ENCODE measurements at regions of chr9 and their contacts with region 1.

Region 1: GRCh38 chr9:126704873-126705766 is 91.4 kb downstream of the LMX1B start:
- DNase-seq: peak; percentile 47 to 98
- H3K4me3 ChIP-seq: peak overlapping the region in 3 of 4 experiments; percentile 5 to 31 (median 19); a peak in 2 of 8 replicates
- H3K27ac ChIP-seq: no peak overlapping the region
- H3K4me1 ChIP-seq: peaks cover 0 to 11% (median 8%) of the 10 kb centered on the region in 4 experiments; a peak in 5 of 7 replicates
- H3K27me3 ChIP-seq: peaks cover 4 to 36% (median 30%) of the 10 kb centered on the region in 4 experiments
- CTCF ChIP-seq: peak in 2 of 3 experiments; percentile 93 to 94; a peak in 3 of 4 replicates
- EP300 ChIP-seq: no peak
- POLR2A ChIP-seq: no peak
- RAD21 ChIP-seq: peak; percentile 68 to 77

Region 2: DNA sequence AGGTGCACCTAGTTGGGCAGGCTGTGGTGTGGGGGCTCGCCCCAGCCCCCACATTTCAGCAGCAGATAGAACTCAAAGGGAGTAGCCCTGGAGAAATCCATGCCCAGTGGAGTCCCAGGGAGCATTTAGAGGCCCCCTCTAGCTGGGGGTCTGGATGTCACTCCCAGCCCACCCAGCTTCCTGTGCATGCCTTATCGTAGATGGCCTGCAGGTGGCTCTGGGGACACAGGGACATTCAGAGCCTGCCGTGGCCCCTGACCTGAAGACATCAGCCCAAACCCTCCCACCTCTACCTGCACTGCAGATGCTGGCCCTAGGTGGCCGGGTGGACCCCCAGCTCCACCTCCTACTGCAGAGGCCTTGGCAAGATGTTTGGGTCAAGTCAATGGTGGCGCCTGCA is 140.4 kb before region 1 on chr9:
- CTCF ChIA-PET with region 1: interaction called, 11 read pairs
- POLR2A ChIA-PET with region 1: no interaction called
- DNase-seq: no peak
- H3K4me3 ChIP-seq: no peak overlapping the region
- H3K27ac ChIP-seq: no peak overlapping the region
- H3K4me1 ChIP-seq: no peaks in the 10 kb centered on the region; a peak in 1 of 7 replicates
- H3K27me3 ChIP-seq: peaks cover 0 to 3% (median 0%) of the 10 kb centered on the region in 4 experiments; a peak in 2 of 7 replicates
- CTCF ChIP-seq: peak; percentile 69 to 73 (median 71)
- EP300 ChIP-seq: no peak
- POLR2A ChIP-seq: no peak
- RAD21 ChIP-seq: peak; percentile 41 to 64

Region 3: GRCh38 chr9:126611592-126612325 is 93.4 kb before region 1 on chr9:
- CTCF ChIA-PET with region 1: interaction called, 54 read pairs
- POLR2A ChIA-PET with region 1: no interaction called
- DNase-seq: peak; percentile 70 to 95
- H3K4me3 ChIP-seq: peak overlapping the region; percentile 30 to 63 (median 34); a peak in 6 of 8 replicates
- H3K27ac ChIP-seq: no peak overlapping the region
- H3K4me1 ChIP-seq: peaks cover 12 to 54% (median 34%) of the 10 kb centered on the region in 4 experiments
- H3K27me3 ChIP-seq: peaks cover 80 to 92% (median 85%) of the 10 kb centered on the region in 4 experiments; a peak in 6 of 7 replicates
- CTCF ChIP-seq: peak in 2 of 3 experiments; percentile 87; a peak in 3 of 4 replicates
- EP300 ChIP-seq: no peak; a peak in 1 of 3 replicates
- POLR2A ChIP-seq: no peak
- RAD21 ChIP-seq: peak; percentile 72 to 82

Region 4: DNA sequence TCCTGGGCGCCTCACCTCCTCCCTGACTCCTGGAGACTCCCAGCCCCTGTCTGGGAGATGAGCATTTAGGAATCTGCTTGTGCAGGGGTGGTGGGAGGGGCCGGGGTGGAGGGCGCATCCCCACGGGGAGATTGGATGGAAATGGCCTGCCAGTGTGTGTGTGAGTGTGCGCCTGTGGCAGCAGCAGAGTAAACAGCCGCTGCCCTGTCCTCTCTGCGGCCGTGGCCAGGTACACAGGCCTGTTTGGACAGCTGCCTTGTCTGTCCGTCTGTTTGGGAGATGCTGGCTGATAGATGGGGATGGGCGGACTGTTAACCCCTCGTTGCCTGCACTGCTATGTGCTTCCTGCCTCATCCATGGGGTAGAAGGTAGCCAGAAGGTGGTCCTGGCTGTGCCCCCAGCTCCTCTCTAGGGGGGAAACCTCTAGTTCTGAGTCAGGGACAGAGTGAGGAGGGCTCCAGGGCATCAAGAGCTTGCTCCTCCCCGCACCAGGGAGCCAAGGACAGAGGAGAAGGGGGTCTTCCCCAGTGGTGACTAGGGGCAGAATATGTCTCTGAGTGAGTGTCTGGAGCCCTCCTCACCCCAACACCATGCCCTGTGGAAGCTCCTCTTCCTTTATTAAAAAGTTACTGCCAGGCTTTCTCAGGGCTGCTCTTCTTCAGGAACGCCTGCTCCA is 31.3 kb before region 1 on chr9:
- CTCF ChIA-PET with region 1: interaction called, 49 read pairs
- POLR2A ChIA-PET with region 1: interaction called, 3 read pairs
- DNase-seq: no peak
- H3K4me3 ChIP-seq: peak overlapping the region in 1 of 4 experiments; percentile 10; a peak in 1 of 8 replicates
- H3K27ac ChIP-seq: no peak overlapping the region
- H3K4me1 ChIP-seq: peaks cover 17 to 66% (median 55%) of the 10 kb centered on the region in 4 experiments
- H3K27me3 ChIP-seq: peaks cover 0 to 27% (median 17%) of the 10 kb centered on the region in 4 experiments; a peak in 6 of 7 replicates
- CTCF ChIP-seq: no peak
- EP300 ChIP-seq: no peak
- POLR2A ChIP-seq: no peak
- RAD21 ChIP-seq: no peak

Region 5: DNA sequence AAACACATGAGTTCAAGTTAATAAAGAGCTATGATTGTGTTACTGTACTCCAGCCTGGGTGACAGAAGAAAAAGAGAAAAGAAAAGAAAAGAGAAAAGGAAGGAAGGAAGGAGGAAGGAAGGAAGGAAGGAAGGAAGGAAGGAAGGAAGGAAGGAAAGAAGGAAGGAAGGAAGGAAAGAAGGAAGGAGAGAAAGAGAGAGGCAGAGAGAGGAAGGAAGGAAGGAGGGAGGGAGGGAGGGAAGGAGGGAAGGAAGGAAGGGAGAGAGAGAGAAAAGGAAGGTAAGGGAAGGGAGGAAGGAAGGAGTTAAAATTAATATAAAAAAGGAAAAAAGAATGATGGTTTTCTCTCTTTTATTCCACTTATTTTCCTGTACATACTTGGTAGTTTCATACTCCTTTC is 10.3 kb after region 1 on chr9:
- CTCF ChIA-PET with region 1: interaction called, 45 read pairs
- POLR2A ChIA-PET with region 1: no interaction called
- DNase-seq: no peak
- H3K4me3 ChIP-seq: no peak overlapping the region
- H3K27ac ChIP-seq: no peak overlapping the region
- H3K4me1 ChIP-seq: peaks cover 2 to 9% (median 8%) of the 10 kb centered on the region in 4 experiments; a peak in 6 of 7 replicates
- H3K27me3 ChIP-seq: no peaks in the 10 kb centered on the region
- CTCF ChIP-seq: no peak
- EP300 ChIP-seq: no peak
- POLR2A ChIP-seq: no peak
- RAD21 ChIP-seq: no peak

Region 6: DNA sequence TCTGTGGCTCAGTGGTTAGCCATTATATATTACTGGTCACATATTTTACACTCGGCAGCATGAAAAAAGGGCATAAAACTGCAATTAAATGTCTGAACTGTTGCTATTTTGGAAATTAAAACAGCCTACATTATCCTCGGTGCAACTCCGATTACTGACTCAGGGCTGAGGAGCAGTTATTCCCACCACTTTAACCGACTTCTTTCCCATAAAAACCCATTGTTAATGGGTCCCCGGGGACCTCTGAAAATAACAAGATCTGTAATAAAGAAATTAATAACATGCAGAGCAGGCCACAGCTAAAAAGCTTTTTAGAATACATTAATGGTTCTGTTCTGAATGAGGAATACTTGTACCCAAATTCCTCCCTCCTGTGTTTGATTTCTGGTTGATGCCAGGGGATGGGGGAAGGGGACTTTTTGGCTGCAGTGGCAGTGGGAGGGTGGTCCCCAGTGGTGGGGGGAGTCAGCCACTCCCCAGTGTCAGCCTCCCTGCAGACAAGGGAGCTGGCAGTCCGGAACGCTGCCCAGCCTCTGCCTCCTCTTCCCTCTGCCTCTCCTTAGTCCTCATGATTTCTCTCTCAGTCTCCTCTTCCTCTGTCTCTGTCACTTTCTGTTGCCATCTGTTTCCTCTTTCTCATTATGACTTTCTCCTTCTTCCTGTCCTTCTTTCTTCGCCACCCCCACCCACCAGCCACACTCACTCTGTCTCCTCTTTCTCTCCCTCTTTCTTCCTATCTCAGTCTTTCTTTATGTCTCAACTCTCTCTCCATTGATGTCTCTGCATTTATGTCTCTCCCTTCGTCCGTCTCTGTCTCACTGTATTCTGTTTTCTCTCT is 40.7 kb after region 1 on chr9:
- CTCF ChIA-PET with region 1: interaction called, 34 read pairs
- POLR2A ChIA-PET with region 1: interaction called, 3 read pairs
- DNase-seq: peak in 1 of 2 experiments; percentile 20
- H3K4me3 ChIP-seq: no peak overlapping the region
- H3K27ac ChIP-seq: no peak overlapping the region
- H3K4me1 ChIP-seq: no peaks in the 10 kb centered on the region
- H3K27me3 ChIP-seq: 0 out of 7 replicates have a peak, but pooled peaks cover 0 to 2% (median under 1%) of the 10 kb centered on the region in 4 experiments
- CTCF ChIP-seq: no peak
- EP300 ChIP-seq: no peak
- POLR2A ChIP-seq: no peak
- RAD21 ChIP-seq: no peak

Region 7: DNA sequence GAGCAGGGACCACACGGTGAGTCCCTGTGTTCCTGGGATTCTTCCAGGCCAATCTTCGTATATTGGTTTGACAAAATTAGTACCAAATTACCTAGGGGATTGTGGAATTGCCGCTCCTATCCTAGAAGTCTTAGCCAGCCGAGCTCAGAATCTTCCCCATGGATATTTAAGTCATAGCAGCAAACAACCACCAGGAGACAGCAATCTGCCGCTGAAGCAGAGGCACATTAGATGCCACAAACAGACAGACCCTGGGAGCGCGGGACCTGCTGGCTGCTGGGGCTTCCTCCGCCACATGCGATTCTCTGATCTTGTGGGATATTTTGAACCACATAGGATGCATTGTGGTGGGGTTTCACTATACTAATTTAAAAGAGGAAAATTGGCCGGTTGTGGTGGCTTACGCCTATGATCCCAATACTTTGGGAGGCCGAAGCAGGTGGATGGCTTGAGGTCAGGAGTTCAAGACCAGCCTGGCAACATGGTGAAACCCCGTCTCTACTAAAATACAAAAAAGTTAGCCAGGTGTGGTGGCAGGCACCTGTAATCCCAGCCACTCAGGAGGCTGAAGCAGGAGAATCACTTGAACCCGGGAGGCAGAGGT is 68.0 kb after region 1 on chr9:
- CTCF ChIA-PET with region 1: interaction called, 415 read pairs
- POLR2A ChIA-PET with region 1: no interaction called
- DNase-seq: peak; percentile 17 to 70
- H3K4me3 ChIP-seq: no peak overlapping the region
- H3K27ac ChIP-seq: no peak overlapping the region
- H3K4me1 ChIP-seq: no peaks in the 10 kb centered on the region
- H3K27me3 ChIP-seq: no peaks in the 10 kb centered on the region
- CTCF ChIP-seq: peak; percentile 61 to 81 (median 77)
- EP300 ChIP-seq: no peak
- POLR2A ChIP-seq: no peak
- RAD21 ChIP-seq: peak; percentile 70 to 75